A549 (cell line): ENCODE measurements at regions of chr16 and their contacts with region 1.

Region 1: DNA sequence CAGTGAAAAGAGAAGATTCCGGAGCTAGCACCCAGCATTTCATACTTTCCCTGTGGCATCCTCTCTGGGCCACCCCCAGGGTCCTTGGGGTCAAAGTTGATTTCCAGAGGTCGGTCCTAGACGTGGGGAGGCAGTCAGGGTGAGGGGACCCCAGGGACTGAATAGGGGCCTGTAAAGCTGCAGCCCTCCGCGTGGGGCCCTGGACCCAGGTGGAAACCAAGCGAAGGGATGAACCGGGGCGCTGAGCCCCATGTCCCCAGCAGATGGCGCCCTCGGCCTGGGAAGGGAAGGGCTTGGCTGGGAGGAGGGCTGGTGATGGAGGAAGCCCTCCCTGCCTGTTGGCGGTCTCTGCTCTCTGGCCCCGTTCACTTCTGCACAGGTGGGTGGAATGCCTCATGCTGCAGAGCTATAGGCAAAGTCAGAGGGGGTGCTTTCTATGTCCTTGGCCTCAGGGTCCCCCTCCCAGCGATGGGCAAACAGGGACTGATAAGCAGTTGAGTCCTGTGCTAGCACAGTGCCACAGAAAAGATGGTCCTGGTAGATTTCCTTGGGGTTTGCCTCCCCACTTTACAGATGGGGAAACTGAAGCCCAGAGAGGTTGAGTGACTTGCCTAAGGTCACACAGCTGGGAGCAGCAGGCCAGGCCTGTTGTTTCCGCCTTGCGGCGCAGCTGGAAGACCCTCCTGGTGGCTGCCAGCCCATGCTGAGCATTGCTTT is 163.4 kb upstream of the CIBAR2 start:
- DNase-seq: peak; percentile 55 to 86
- ATAC-seq: peak; percentile 87 to 97
- H3K4me3 ChIP-seq: no peak overlapping the region
- H3K27ac ChIP-seq: no peak overlapping the region
- H3K4me1 ChIP-seq: no peaks in the 10 kb centered on the region
- CTCF ChIP-seq: peak; percentile 83
- EP300 ChIP-seq: no peak
- POLR2A ChIP-seq: no peak
- RAD21 ChIP-seq: peak; percentile 73 to 82

Region 2: GRCh38 chr16:85245307-85246172 is 30.2 kb before region 1 on chr16:
- CTCF ChIA-PET with region 1: interaction called, 34 read pairs
- POLR2A ChIA-PET with region 1: no interaction called
- DNase-seq: peak; percentile 69
- ATAC-seq: peak; percentile 72 to 89
- H3K4me3 ChIP-seq: no peak overlapping the region
- H3K27ac ChIP-seq: no peak overlapping the region
- H3K4me1 ChIP-seq: no peaks in the 10 kb centered on the region
- CTCF ChIP-seq: peak; percentile 73
- EP300 ChIP-seq: no peak
- POLR2A ChIP-seq: no peak
- RAD21 ChIP-seq: peak; percentile 59 to 67

Region 3: GRCh38 chr16:85253084-85253941 is 22.4 kb before region 1 on chr16:
- CTCF ChIA-PET with region 1: interaction called, 80 read pairs
- POLR2A ChIA-PET with region 1: no interaction called
- DNase-seq: peak; percentile 51 to 85
- ATAC-seq: peak; percentile 81 to 96
- H3K4me3 ChIP-seq: no peak overlapping the region
- H3K27ac ChIP-seq: no peak overlapping the region
- H3K4me1 ChIP-seq: no peaks in the 10 kb centered on the region
- CTCF ChIP-seq: peak; percentile 86
- EP300 ChIP-seq: no peak
- POLR2A ChIP-seq: no peak
- RAD21 ChIP-seq: peak; percentile 41 to 46; a peak in 3 of 5 replicates

Region 4: GRCh38 chr16:85262558-85263238 is 13.0 kb before region 1 on chr16:
- CTCF ChIA-PET with region 1: interaction called, 80 read pairs
- POLR2A ChIA-PET with region 1: no interaction called
- DNase-seq: no peak
- ATAC-seq: no peak
- H3K4me3 ChIP-seq: no peak overlapping the region
- H3K27ac ChIP-seq: no peak overlapping the region
- H3K4me1 ChIP-seq: no peaks in the 10 kb centered on the region
- CTCF ChIP-seq: no peak
- EP300 ChIP-seq: no peak
- POLR2A ChIP-seq: no peak
- RAD21 ChIP-seq: no peak

Region 5: DNA sequence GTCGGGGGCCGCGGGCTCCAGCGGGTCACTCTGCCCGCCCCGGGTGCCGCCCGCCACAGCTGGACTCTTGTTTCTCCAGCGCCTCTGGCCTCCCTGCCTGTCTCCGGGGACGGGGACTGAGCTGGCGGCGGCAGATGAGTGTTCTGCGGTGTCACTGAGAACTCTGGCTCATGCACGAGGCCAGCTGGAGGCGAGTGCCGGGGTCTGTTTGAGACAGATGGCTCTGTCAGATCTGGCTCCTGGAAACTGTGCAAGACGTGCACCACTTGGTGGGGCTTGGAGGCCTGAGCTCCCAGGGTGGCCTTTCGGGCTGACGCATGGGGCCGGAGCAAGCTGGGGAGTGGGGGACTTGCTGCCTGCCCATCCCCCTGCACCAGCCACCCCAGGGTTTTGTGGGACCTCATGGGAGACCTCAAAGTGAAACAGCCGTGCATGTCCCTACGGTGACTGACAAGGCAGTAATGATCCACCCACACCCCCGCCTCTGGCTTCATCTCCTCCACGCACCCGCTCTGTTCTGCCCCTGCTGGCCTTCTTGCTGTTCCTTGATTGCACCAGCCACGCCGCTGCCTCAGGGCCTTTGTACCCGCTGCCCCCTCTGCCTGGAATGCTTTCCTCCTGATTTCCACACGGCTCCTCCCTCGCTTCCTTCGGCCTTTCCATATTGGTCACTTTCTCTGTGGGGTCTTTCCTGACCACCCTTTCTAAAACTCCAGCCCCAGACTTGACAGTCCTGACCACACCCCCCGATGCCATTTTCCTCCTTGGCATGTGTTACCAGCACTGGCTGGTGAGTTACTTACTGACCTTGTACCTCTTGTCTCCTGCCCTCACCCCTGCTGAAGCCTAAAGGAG is 11.5 kb after region 1 on chr16:
- CTCF ChIA-PET with region 1: interaction called, 35 read pairs
- POLR2A ChIA-PET with region 1: no interaction called
- DNase-seq: no peak
- ATAC-seq: 0 out of 6 replicates have a peak, but pooled peaks of 1 of the 2 experiments have one; percentile 23
- H3K4me3 ChIP-seq: no peak overlapping the region
- H3K27ac ChIP-seq: no peak overlapping the region
- H3K4me1 ChIP-seq: no peaks in the 10 kb centered on the region
- CTCF ChIP-seq: no peak
- EP300 ChIP-seq: no peak
- POLR2A ChIP-seq: no peak
- RAD21 ChIP-seq: no peak

Region 6: DNA sequence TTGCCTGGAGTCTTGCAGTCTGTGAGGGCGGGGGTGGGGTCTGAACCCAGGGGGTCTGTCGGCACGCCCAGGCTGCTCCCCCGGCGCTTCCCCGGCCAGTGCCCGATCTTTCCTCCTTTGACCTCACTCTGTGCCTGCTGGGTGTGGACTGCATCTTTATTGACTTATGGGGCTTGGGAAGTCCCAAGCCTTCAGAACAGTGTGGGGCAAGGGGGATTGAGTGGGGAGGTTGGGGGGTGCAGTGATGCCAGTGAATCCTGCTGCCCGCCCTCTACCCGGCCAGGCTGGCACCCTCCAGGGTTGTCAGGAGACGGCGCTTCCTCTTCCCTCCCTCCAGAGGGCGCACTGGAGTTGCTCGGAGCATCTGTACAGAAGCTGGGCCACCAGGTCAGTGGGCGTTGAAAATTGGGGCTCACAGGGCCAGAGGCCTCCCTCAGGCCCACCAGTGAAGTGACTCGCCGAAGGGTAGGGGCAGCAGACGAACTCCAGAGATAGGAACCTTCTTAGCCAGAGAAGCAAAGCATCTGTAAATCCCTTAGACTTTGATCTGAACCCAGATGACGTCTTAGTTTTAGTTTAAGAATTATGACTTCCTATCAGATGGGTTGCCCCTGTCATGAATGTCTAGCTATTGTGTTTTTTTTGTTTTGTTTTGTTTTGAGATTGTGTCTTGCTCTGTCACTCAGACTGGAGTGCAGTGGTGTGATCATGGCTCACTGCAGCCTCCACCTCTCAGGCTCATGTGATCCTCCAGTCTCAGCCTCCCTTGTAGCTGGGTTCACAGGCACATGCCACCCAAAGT is 21.4 kb after region 1 on chr16:
- CTCF ChIA-PET with region 1: interaction called, 23 read pairs
- POLR2A ChIA-PET with region 1: no interaction called
- DNase-seq: peak; percentile 53 to 79
- ATAC-seq: peak; percentile 88 to 98
- H3K4me3 ChIP-seq: no peak overlapping the region
- H3K27ac ChIP-seq: no peak overlapping the region
- H3K4me1 ChIP-seq: peaks cover 7% of the 10 kb centered on the region; the same call in 2 of the 3 replicates
- CTCF ChIP-seq: peak; percentile 64
- EP300 ChIP-seq: no peak
- POLR2A ChIP-seq: no peak
- RAD21 ChIP-seq: peak; percentile 33 to 42; a peak in 3 of 5 replicates

Region 7: DNA sequence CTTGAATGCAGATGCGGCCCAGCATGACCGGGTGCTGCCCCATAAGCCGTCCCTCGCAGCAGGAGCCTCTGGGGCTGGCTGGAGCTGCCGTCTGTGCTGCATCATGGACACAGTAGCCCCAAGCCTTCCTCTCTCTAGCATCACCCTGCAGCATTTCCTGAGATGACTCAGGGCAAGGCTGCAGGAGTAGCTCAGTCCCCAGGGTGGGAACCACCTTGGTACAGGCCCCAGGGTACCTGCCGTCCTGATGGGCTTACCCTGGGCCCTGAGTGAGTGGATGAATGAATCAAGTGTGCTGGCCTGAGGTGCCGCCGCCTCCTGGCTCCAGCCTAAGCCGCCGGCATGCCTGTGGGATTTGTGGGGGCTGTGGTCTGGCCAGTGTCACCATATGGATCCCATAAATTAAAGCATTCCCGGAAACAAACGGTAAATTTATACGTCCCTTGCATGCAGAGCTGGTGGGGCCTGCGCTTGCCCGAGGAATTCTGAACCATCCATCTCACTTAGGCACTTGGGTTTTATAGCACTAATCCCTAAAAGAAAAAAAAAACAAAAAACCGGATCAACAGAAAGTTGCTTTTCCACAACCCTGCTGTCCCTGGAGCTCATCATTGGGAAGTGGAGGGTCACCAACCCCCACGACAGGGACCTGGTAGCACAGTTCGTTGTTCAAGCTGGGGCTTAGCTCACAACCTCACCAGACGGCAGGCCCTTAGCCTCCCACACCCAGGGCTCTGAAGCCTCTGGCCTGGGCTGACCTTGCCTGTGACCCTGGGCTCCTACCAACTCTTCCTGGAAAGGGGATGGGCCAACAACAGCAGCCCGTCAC is 79.2 kb after region 1 on chr16:
- CTCF ChIA-PET with region 1: no interaction called
- POLR2A ChIA-PET with region 1: no interaction called
- DNase-seq: no peak
- ATAC-seq: no peak
- H3K4me3 ChIP-seq: no peak overlapping the region
- H3K27ac ChIP-seq: no peak overlapping the region
- H3K4me1 ChIP-seq: peaks cover 18% of the 10 kb centered on the region
- CTCF ChIP-seq: no peak
- EP300 ChIP-seq: no peak
- POLR2A ChIP-seq: no peak
- RAD21 ChIP-seq: no peak